CD8-positive, alpha-beta memory T cell (primary cell): ENCODE measurements at regions of chr19 and their contacts with region 1.

Region 1: GRCh38 chr19:37370880-37371661 is at the start of gene ZNF527:
- DNase-seq: peak; percentile 95 to 97 (median 96)
- H3K4me3 ChIP-seq: peak within 1 kb of the TSS; percentile 84
- H3K4me3 Mint-ChIP-seq: peak within 1 kb of the TSS; percentile 91 to 100 (median 99)
- H3K27ac ChIP-seq: peak within 1 kb of the TSS; percentile 86
- H3K27ac Mint-ChIP-seq: peak within 1 kb of the TSS; percentile 84 to 99 (median 98)
- H3K4me1 ChIP-seq: peaks cover 13% of the 10 kb centered on the region
- H3K4me1 Mint-ChIP-seq: peaks cover 15 to 23% (median 19%) of the 10 kb centered on the region in 3 donors
- H3K27me3 ChIP-seq: no peaks in the 10 kb centered on the region
- H3K27me3 Mint-ChIP-seq: no peaks in the 10 kb centered on the region
- total RNA-seq, gene ZNF527: 5.2 to 5.6 TPM

Region 2: DNA sequence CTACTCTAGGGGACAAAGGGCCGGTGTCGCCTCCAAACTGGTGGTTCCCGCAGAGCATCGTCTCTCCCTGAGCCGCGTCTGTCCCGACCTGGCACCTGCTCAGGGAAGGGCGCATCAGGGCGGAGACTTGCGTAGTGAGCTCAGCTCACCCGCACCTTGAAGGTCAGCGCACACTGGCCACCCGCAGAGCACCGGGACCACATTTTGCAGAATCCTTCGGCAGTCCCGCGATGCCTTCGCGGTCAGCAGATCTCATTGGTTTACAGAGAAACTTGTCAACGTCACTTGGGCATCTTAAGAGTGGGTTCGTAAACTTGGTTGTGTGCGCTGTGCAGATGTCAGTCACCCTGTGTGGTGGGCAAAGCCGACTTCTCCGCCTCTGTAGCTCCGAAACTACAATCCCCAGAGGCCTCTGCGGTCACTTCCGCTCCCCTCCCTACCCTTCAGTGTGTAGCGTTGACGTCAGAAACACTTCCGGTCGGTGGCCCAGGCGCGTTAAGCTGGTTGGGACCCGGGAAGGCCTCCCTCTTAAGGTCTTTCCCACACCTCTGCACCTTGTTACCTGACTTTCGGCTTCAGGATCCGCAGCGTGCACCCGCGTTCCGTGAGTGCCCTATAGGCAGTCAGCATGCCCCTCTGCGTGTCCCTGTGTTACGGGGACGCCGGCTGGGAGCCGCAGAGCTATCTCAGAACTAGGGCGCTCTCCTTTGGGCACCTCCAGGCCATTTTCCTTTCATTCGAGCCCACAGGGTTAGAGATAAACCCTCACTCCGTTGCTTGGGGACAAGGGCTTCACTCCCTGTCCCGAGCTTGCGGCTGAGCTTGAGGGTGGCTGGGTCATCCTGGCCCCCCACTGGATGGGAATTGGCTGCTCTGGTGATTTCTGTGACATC is 36.6 kb before region 1 on chr19:
- CTCF ChIA-PET with region 1: interaction called, 6 read pairs
- POLR2A ChIA-PET with region 1: interaction called, 15 read pairs
- DNase-seq: peak; percentile 86 to 95 (median 88)
- H3K4me3 ChIP-seq: peak overlapping the region; percentile 71
- H3K4me3 Mint-ChIP-seq: peak overlapping the region; percentile 90 to 98 (median 91)
- H3K27ac ChIP-seq: peak overlapping the region; percentile 74
- H3K27ac Mint-ChIP-seq: peak overlapping the region; percentile 69 to 97 (median 96)
- H3K4me1 ChIP-seq: peaks cover 19% of the 10 kb centered on the region
- H3K4me1 Mint-ChIP-seq: peaks cover 35 to 51% (median 50%) of the 10 kb centered on the region in 3 donors
- H3K27me3 ChIP-seq: no peaks in the 10 kb centered on the region
- H3K27me3 Mint-ChIP-seq: peaks cover 0 to 2% of the 10 kb centered on the region in 2 donors

Region 3: DNA sequence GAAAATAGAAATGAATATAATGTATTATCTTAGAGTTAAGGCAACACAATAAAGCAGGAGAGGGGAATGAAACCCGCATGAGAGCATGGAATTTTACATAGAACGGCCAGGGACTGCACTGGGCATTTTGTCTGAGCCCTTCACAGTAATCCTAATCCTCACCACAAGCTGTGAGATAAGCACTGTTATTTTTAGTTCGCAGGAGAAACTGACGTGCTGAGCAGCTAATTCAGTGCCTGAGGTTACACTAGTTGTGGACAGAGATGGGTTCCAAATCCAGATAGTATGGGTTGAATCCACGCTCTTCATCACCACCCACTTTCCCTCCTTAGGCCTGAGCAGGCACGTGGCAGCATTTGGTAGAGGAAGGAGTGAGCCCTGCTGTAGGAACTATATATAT is 25.0 kb before region 1 on chr19:
- CTCF ChIA-PET with region 1: no interaction called
- POLR2A ChIA-PET with region 1: no interaction called
- DNase-seq: no peak
- H3K4me3 ChIP-seq: no peak overlapping the region
- H3K4me3 Mint-ChIP-seq: no peak overlapping the region
- H3K27ac ChIP-seq: no peak overlapping the region
- H3K27ac Mint-ChIP-seq: peak overlapping the region in 2 of 8 donors; percentile 10 to 14
- H3K4me1 ChIP-seq: no peaks in the 10 kb centered on the region
- H3K4me1 Mint-ChIP-seq: peaks cover 5 to 7% (median 7%) of the 10 kb centered on the region in 3 donors
- H3K27me3 ChIP-seq: no peaks in the 10 kb centered on the region
- H3K27me3 Mint-ChIP-seq: no peaks in the 10 kb centered on the region